Cardiac septum (tissue), 1 donor: ENCODE measurements at regions of chr12 and their contacts with region 1.

Region 1: DNA sequence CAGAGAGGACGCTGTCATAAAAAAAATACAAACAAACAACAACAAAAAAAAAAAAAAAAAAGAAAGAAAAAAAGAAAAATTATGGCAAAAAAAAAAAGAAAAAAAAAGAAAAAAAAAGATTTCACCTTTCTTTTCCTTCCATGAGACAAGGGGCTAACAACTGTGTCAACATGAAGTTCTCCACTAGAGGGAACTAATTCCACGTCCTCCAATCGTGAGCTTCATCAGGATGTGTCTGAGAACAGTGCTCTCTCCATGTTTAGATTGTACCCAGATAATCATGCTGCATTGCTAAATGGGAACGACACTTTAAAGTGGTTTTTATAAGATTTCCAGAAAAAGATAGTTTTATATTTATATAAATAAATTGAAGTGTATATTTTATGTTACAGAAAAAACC is 96.2 kb upstream of the PTPRB start:
- DNase-seq: no peak

Region 2: GRCh38 chr12:70849265-70849960 is 116.0 kb after region 1 on chr12:
- intact Hi-C with region 1: loop called (anchors 5 kb)
- DNase-seq: no peak